Activated CD8-positive, alpha-beta T cell treated with anti-CD3 and anti-CD28 coated beads for 36 hours (primary cell): ENCODE measurements at regions of chr7 and their contacts with region 1.

Region 1: GRCh38 chr7:134113655-134114054 is 13.5 kb upstream of the LRGUK start:
- DNase-seq: no peak
- ATAC-seq: no peak
- H3K4me3 Mint-ChIP-seq: no peak overlapping the region
- H3K27ac Mint-ChIP-seq: no peak overlapping the region
- H3K4me1 Mint-ChIP-seq: no peaks in the 10 kb centered on the region
- H3K27me3 Mint-ChIP-seq: no peaks in the 10 kb centered on the region
- CTCF ChIP-seq: no peak

Region 2: DNA sequence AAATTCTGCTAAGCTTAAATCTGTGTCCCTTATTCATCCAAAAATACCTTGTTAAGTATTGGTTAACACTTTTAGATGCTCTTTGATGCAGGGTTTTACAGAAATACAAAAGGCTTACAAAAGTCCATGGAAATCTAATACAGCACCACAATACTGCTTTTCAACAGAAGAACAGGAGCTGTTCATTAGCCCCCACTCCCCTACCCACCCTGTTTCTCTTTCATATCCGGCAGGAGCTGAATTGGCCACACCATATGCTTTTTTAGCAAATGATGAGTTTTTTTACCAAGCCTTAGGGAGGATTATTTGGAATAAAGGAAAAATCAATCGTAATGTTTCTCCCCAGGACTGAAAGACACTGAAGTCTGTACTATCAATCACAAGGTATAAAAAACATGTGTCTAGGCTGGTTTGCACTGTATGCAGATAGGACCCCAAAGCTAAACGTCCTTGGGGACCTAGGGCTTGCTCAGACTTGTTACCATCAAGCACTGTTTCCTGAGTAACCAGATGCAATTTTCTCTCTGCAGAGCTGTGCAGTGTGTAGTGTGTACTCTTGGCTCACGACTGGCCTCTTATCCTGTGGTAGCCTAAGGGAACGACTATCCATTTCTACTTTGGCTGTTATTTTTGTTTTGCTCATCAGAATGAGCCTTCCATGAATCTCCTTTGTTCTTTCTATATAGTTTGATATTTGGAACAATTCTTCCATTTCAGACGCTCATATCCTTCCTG is 129.8 kb before region 1 on chr7:
- CTCF ChIA-PET with region 1: no interaction called
- POLR2A ChIA-PET with region 1: no interaction called
- intact Hi-C with region 1: no loop called
- DNase-seq: no peak
- ATAC-seq: no peak
- H3K4me3 Mint-ChIP-seq: no peak overlapping the region
- H3K27ac Mint-ChIP-seq: no peak overlapping the region
- H3K4me1 Mint-ChIP-seq: no peaks in the 10 kb centered on the region
- H3K27me3 Mint-ChIP-seq: no peaks in the 10 kb centered on the region
- CTCF ChIP-seq: no peak

Region 3: DNA sequence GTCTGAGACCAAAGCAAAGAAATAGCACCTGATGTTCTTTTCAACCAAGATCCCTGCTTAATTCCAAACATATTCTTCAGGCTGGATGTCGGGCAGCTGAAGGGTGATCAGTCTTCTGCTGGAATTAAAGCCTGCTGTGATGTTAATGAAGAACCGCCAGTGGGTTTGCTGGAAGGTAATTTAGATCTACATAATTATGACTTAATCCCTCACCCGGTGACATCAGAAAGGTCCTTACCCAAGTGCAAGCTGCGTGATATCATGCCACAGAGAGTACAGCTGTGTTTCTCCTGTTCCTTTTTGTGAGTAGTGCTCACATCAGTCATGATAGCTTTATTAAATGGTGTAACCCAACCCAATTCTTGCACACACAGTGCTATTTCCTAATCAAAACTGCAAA is 15.6 kb before region 1 on chr7:
- CTCF ChIA-PET with region 1: no interaction called
- POLR2A ChIA-PET with region 1: no interaction called
- intact Hi-C with region 1: loop called (anchors 2 kb)
- DNase-seq: no peak
- ATAC-seq: no peak
- H3K4me3 Mint-ChIP-seq: no peak overlapping the region
- H3K27ac Mint-ChIP-seq: no peak overlapping the region
- H3K4me1 Mint-ChIP-seq: no peaks in the 10 kb centered on the region
- H3K27me3 Mint-ChIP-seq: no peaks in the 10 kb centered on the region
- CTCF ChIP-seq: no peak

Region 4: DNA sequence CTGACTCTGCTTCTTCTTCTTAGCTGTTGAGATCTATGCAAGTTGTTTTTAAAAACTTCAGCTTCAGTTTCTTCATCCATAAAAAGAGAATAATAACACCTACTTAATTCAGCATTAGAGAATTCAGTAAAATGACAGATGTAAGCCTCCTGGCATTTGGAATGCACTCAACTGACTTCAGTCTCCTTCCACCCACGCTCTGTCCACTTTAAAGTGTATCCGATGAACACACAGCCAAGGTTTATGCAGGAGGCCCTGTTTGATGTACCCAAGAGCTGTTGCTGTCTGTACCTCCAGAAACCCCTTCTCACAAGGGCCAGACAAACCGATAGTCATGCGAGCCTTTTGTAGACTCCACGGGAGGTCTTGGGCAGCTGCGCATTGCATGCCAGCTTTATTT is 230.1 kb after region 1 on chr7:
- CTCF ChIA-PET with region 1: no interaction called
- POLR2A ChIA-PET with region 1: no interaction called
- intact Hi-C with region 1: no loop called
- DNase-seq: no peak
- ATAC-seq: no peak
- H3K4me3 Mint-ChIP-seq: no peak overlapping the region
- H3K27ac Mint-ChIP-seq: no peak overlapping the region
- H3K4me1 Mint-ChIP-seq: no peaks in the 10 kb centered on the region
- H3K27me3 Mint-ChIP-seq: peaks cover 13% of the 10 kb centered on the region
- CTCF ChIP-seq: no peak